CD4-positive, alpha-beta memory T cell (primary cell): ENCODE measurements at regions of chr14 and their contacts with region 1.

Region 1: GRCh38 chr14:105248368-105248756 is at the start of gene BTBD6:
- DNase-seq: peak; percentile 87 to 90 (median 90)
- H3K4me3 ChIP-seq: peak within 1 kb of the TSS; percentile 42 to 71
- H3K4me3 Mint-ChIP-seq: peak within 1 kb of the TSS; percentile 77 to 84 (median 80)
- H3K27ac ChIP-seq: peak within 1 kb of the TSS; percentile 63
- H3K27ac Mint-ChIP-seq: peak within 1 kb of the TSS; percentile 68 to 89 (median 87)
- H3K4me1 ChIP-seq: peaks cover 19% of the 10 kb centered on the region
- H3K4me1 Mint-ChIP-seq: peaks cover 14 to 48% (median 19%) of the 10 kb centered on the region in 4 donors
- H3K27me3 ChIP-seq: no peaks in the 10 kb centered on the region
- H3K27me3 Mint-ChIP-seq: no peaks in the 10 kb centered on the region
- total RNA-seq, gene BTBD6: 52.0 to 56.7 TPM

Region 2: GRCh38 chr14:105294142-105294597 is 45.8 kb after region 1 on chr14:
- CTCF ChIA-PET with region 1: no interaction called
- POLR2A ChIA-PET with region 1: interaction called, 31 read pairs
- intact Hi-C with region 1: no loop called
- DNase-seq: peak; percentile 54 to 81 (median 70)
- H3K4me3 ChIP-seq: no peak overlapping the region
- H3K4me3 Mint-ChIP-seq: peak overlapping the region; percentile 36 to 83 (median 72)
- H3K27ac ChIP-seq: peak overlapping the region; percentile 46
- H3K27ac Mint-ChIP-seq: peak overlapping the region; percentile 88 to 100 (median 97)
- H3K4me1 ChIP-seq: peaks cover 35% of the 10 kb centered on the region
- H3K4me1 Mint-ChIP-seq: peaks cover 18 to 56% (median 35%) of the 10 kb centered on the region in 4 donors
- H3K27me3 ChIP-seq: no peaks in the 10 kb centered on the region
- H3K27me3 Mint-ChIP-seq: no peaks in the 10 kb centered on the region

Region 3: DNA sequence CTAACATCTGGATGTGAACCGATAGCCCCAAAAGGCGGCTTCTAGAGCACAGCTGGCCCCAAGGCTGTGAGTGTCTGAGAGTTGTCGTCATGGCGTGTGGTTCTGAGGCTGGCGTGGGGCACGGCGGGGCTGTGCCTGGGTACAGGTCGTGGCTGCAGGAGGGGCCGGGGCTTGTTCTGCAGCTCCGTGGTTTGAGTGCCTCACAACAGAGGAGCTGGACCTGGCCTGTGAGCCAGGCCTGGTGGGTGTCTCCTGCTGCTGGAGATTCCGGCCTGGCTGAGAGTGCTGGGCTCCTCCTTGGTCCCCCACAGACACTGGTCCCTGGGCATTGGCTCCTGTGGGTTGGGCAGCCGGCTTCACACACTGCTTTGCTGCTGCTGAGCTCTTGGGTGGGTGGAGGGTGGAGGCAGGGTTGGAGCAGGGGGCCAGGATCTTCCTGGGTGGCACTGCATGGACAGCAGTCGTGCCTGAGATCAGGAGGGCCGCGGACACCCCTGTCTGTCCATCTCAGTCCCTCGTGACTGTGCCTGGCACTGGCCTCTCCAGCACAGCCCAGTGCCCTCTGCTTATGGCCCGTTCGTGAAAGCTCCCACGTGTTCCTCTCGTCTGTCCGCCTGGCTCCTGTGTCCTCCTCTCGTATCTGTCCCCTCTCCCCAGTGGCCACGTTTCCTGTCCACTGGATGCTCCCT is 118.2 kb after region 1 on chr14:
- CTCF ChIA-PET with region 1: no interaction called
- POLR2A ChIA-PET with region 1: no interaction called
- intact Hi-C with region 1: no loop called
- DNase-seq: no peak
- H3K4me3 ChIP-seq: no peak overlapping the region
- H3K4me3 Mint-ChIP-seq: no peak overlapping the region
- H3K27ac ChIP-seq: no peak overlapping the region
- H3K27ac Mint-ChIP-seq: no peak overlapping the region
- H3K4me1 ChIP-seq: peaks cover 8% of the 10 kb centered on the region
- H3K4me1 Mint-ChIP-seq: peaks cover 9 to 17% (median 13%) of the 10 kb centered on the region in 4 donors
- H3K27me3 ChIP-seq: no peaks in the 10 kb centered on the region
- H3K27me3 Mint-ChIP-seq: no peaks in the 10 kb centered on the region